A673 (cell line): ENCODE measurements at regions of chr10 and their contacts with region 1.

Region 1: DNA sequence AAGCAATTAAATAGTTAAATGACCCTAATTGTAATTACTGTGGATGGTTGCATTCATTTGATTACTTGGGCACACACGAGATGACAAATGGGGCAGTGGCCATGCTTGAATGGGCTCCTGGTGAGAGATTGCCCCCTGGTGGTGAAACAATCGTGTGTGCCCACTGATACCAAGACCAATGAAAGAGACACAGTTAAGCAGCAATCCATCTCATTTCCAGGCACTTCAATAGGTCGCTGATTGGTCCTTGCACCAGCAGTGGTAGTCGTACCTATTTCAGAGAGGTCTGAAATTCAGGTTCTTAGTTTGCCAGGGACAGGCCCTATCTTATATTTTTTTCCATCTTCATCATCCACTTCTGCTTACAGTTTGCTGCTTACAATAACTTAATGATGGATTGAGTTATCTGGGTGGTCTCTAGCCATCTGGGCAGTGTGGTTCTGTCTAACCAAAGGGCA is 8.3 kb downstream of the PCBD1 start:
- DNase-seq: peak; percentile 83
- H3K4me3 ChIP-seq: no peak overlapping the region
- H3K27ac ChIP-seq: no peak overlapping the region
- H3K4me1 ChIP-seq: no peaks in the 10 kb centered on the region
- H3K27me3 ChIP-seq: no peaks in the 10 kb centered on the region
- CTCF ChIP-seq: peak; percentile 93

Region 2: GRCh38 chr10:69515699-69516259 is 1364.3 kb before region 1 on chr10:
- CTCF ChIA-PET with region 1: interaction called, 10 read pairs
- POLR2A ChIA-PET with region 1: no interaction called
- intact Hi-C with region 1: no loop called
- DNase-seq: peak; percentile 76
- H3K4me3 ChIP-seq: no peak overlapping the region
- H3K27ac ChIP-seq: no peak overlapping the region
- H3K4me1 ChIP-seq: no peaks in the 10 kb centered on the region
- H3K27me3 ChIP-seq: peaks cover 29% of the 10 kb centered on the region
- CTCF ChIP-seq: peak; percentile 90

Region 3: DNA sequence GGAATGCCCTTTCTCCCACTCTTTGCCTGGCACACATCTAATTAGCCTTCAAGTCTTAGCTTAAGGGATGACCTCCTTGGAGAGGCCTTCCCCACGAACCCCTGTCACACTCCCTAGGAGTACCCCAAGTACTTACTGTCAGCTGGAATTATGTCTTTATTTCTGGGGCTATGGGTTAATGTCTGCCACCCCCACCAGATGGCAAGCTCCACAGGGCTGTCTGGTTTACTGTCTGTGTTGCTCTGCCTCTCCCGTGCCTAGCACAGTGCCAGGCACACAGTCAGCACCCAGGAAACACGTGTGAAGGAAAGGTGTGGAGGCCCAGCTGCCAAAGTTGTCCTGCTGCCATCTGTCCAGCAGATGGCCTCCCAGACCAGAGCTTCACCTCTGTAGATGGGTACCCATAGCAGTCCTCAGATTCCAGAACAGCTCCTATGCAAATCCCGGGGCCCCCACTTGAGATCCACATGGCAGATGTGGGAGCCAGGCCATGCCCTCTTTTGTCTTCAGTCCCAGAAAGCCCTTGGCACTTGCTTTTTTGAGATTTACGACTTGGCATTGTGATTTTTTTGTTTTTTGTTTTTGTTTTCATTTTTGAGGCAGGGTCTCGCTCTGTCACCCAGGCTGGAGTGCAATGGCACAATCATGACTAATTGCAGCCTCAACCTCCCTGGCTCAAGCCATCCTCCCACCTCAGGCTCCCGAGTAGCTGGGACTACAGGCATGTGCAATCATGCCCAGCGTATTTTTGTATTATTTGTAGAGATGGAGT is 418.7 kb before region 1 on chr10:
- CTCF ChIA-PET with region 1: no interaction called
- POLR2A ChIA-PET with region 1: no interaction called
- intact Hi-C with region 1: loop called (anchors 5 kb)
- DNase-seq: peak; percentile 59
- H3K4me3 ChIP-seq: no peak overlapping the region
- H3K27ac ChIP-seq: no peak overlapping the region
- H3K4me1 ChIP-seq: peaks cover 20% of the 10 kb centered on the region
- H3K27me3 ChIP-seq: no peaks in the 10 kb centered on the region
- CTCF ChIP-seq: peak; percentile 71

Region 4: DNA sequence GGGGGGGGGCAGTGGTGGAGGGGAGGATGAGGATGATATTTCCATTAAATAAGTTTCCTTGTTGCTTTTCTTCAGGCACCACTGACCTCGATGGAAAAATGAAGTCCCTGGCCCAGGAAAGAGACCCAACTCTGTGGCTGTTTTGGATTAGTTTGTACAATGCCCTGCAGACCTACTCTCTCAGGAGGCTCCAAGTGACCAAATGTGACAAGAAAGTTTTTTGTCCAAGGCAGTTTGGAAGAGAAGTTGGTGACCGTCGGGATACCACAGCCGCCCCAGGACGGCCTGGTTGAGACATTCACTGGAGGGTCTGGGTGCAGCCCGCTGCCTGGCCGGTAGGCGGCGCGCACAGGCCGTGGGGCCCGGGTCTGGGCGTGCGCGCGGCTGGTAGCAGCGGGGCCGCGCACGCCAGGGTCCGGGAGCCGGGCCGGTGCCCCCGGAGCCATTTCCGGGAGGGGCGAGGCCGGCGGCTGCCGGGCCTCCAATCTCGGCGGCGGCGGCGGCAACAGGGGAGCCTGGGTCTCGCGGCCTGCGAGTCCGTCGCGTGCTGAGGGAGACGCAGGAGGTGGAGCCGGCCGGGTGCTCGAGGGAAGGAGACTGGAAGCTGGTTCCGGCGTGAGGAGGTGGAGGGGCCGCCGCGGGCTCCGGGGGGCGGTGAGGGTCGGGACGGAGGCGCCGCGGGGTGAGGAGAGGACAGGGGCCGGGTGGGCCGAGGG is 64.4 kb before region 1 on chr10 and contains the start of gene SGPL1:
- CTCF ChIA-PET with region 1: interaction called, 3 read pairs
- POLR2A ChIA-PET with region 1: no interaction called
- intact Hi-C with region 1: loop called (anchors 2 kb)
- DNase-seq: peak; percentile 88
- H3K4me3 ChIP-seq: peak within 1 kb of the TSS; percentile 90
- H3K27ac ChIP-seq: peak within 1 kb of the TSS; percentile 78
- H3K4me1 ChIP-seq: peaks cover 4% of the 10 kb centered on the region
- H3K27me3 ChIP-seq: no peaks in the 10 kb centered on the region
- CTCF ChIP-seq: peak; percentile 81
- total RNA-seq, gene SGPL1: 48.6 and 65.5 TPM in 2 replicates